HCT116 (cell line): ENCODE measurements at regions of chr1 and their contacts with region 1.

Region 1: GRCh38 chr1:107858323-107858722 is 106.7 kb downstream of the VAV3 start:
- DNase-seq: no peak
- ATAC-seq: no peak
- H3K4me3 ChIP-seq: no peak overlapping the region
- H3K27ac ChIP-seq: no peak overlapping the region
- H3K4me1 ChIP-seq: no peaks in the 10 kb centered on the region
- H3K27me3 ChIP-seq: peaks cover 12% of the 10 kb centered on the region
- CTCF ChIP-seq: no peak
- POLR2A ChIP-seq: no peak
- RAD21 ChIP-seq: no peak

Region 2: GRCh38 chr1:107877745-107878144 is 19.4 kb after region 1 on chr1:
- CTCF ChIA-PET with region 1: no interaction called
- POLR2A ChIA-PET with region 1: no interaction called
- RAD21 ChIA-PET with region 1: no interaction called
- intact Hi-C with region 1: loop called (anchors 2 kb)
- DNase-seq: no peak
- ATAC-seq: no peak
- H3K4me3 ChIP-seq: no peak overlapping the region
- H3K27ac ChIP-seq: no peak overlapping the region
- H3K4me1 ChIP-seq: no peaks in the 10 kb centered on the region
- H3K27me3 ChIP-seq: peaks cover 19% of the 10 kb centered on the region
- CTCF ChIP-seq: no peak
- POLR2A ChIP-seq: no peak
- RAD21 ChIP-seq: no peak